ENCODE measurements at regions of chr21 and their contacts with region 1.

Region 1: DNA sequence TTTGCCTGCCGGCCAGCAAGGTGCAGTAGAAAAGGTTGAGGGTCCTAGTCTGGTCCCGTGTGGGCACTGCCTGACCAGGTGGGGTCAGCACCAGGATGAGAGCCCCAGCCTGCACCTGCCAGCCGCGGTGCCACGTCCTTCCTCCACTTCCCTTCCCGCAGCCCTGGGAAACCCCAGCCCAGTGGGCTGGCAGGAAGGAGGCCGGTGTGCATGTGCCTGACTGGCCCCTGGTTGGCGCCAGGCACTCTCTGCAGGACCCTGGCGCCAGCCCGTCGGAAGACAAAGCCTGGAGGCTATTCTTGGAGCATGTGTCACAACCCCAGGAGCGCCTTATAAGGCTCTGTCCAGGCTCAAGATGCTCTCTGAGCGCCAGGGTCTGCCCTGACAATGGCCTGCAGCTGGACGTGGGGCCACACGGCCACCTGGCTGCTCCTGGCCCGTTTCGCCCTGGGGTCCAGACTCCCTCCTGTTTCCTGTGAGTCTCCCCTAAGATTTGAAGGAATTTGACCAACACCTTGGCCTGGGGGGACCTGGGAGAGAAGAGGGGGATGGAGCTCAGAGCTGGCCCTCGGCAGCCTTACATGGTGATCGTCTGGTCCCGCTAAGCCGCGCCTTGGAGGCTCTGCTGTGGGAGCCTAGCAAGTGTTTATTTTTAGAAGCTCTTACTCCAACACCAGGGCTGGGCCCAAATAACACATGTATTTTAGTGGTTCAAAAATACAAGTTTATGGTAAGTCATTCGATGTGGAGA is 31.9 kb upstream of the POFUT2 start:
- DNase-seq: peak; percentile 85
- H3K4me3 ChIP-seq: no peak overlapping the region
- H3K27ac ChIP-seq: peak overlapping the region; percentile 90
- H3K4me1 ChIP-seq: peaks cover 39% of the 10 kb centered on the region
- H3K27me3 ChIP-seq: no peaks in the 10 kb centered on the region
- CTCF ChIP-seq: peak in 1 of 2 donors; percentile 33
- POLR2A ChIP-seq: peak; percentile 47

Region 2: DNA sequence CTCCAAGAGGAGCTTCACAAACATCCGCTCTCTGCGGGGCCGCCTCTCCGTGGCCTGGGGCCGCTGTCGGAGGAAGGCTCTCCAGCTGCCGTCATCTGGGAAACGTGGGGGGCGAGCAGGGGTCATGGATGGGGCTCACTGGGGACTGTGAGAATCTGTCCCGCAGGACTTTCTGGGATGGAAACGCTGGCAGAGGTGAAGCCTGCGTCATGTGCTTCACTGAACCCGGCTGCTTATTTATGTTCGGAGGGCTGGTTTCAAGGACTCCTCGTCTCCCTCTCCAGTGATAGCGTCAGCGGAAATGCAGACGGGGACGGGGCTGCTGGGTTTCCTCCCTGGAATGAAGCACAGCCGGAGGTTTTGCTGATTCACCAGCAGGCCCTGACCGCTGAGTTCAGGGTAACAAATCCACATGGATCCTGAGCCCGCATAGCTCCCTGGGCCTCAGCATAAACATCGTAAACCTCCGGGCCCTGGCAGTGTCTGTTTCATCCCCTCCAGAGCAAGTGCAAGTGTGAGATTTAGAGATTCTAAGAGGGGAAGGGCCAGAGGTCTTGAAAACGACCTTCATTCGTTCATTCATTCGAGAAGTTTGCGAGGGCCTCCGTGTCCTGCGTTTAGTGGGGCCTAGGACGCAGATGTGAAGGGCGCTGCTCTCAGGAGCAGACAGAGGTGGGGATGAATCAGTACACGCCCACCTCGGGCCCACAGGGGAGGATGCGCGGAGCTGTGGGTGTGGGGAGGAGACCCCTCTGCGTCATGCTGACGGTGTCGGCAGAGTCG is 24.9 kb before region 1 on chr21:
- CTCF ChIA-PET with region 1: interaction called, 6 read pairs
- POLR2A ChIA-PET with region 1: no interaction called
- dilution Hi-C with region 1: no loop called
- intact Hi-C with region 1: loop called (anchors 1 kb)
- DNase-seq: peak; percentile 98
- H3K4me3 ChIP-seq: no peak overlapping the region
- H3K27ac ChIP-seq: peak overlapping the region; percentile 100
- H3K4me1 ChIP-seq: peaks cover 35% of the 10 kb centered on the region
- H3K27me3 ChIP-seq: no peaks in the 10 kb centered on the region
- CTCF ChIP-seq: no peak
- POLR2A ChIP-seq: peak; percentile 87

Region 3: DNA sequence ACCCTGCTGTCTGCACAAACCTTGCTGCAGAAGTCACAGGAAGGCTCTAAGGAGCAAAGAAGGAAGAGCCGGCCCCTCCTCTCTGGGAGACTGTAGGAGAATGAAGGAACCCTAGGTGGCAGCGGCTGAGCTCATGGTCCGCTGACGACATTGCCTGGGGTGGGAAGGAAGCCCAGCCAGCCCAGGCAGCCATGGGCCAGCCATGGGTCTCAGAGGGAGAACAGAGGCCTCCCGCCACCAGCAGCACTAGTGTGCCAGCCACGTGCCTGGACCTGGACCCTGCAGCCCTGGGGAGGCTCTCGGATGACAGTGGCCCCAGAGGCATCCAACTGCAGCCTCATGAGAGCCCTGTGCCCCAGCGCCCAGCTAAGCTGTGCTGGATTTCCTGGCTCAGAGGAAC is 17.2 kb after region 1 on chr21:
- CTCF ChIA-PET with region 1: no interaction called
- POLR2A ChIA-PET with region 1: no interaction called
- dilution Hi-C with region 1: no loop called
- intact Hi-C with region 1: no loop called
- DNase-seq: no peak
- H3K4me3 ChIP-seq: no peak overlapping the region
- H3K27ac ChIP-seq: no peak overlapping the region
- H3K4me1 ChIP-seq: peaks cover 11% of the 10 kb centered on the region
- H3K27me3 ChIP-seq: no peaks in the 10 kb centered on the region
- CTCF ChIP-seq: no peak
- POLR2A ChIP-seq: no peak

Region 4: GRCh38 chr21:45404730-45405270 is 85.2 kb after region 1 on chr21 and contains the start of gene COL18A1:
- CTCF ChIA-PET with region 1: interaction called, 4 read pairs
- POLR2A ChIA-PET with region 1: no interaction called
- dilution Hi-C with region 1: no loop called
- intact Hi-C with region 1: loop called (anchors 1 kb)
- DNase-seq: peak; percentile 39
- H3K4me3 ChIP-seq: peak within 1 kb of the TSS; percentile 72 to 87 (median 79)
- H3K27ac ChIP-seq: peak within 1 kb of the TSS; percentile 95
- H3K4me1 ChIP-seq: peaks cover 18% of the 10 kb centered on the region
- H3K27me3 ChIP-seq: no peaks in the 10 kb centered on the region
- CTCF ChIP-seq: no peak
- POLR2A ChIP-seq: no peak
- total RNA-seq, gene COL18A1: 252 and 274 TPM in 2 replicates

Region 5: DNA sequence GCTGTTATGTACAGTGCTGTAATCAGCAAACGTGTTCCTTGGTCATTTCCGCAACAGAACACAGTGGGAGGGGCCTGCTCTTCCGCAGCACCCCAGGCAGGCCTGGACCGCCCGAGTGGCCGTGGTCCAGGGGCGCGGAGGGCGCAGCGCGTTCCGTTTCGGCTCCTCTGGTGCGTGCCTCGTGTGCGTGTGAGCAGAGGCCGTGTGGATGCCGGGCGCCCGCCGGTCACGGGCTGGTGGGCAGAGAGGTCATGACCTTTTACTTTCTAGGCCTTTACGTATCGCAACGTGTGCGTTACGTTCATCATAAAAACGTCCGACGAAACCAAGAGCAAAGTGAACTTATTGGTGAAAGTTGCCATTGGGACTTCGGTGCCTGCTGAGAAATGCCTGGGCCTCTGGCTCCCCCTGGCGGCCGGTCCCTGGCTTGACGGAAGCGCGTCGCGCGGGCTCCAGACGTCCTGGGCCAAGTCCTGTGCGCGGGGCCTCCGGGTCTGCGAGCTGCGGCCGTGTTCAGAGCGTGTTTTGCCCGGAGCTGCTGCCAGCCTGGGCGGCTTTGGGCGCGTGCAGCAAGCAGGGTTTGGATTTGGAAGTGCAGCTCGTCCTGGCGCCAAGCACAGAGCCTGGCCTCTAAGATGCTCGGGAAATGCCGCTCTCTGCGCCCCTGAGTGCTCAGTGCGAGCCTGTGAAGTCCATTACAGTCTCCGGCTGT is 119.7 kb after region 1 on chr21:
- CTCF ChIA-PET with region 1: interaction called, 5 read pairs
- POLR2A ChIA-PET with region 1: interaction called, 4 read pairs
- dilution Hi-C with region 1: no loop called
- intact Hi-C with region 1: loop called (anchors 1 kb)
- DNase-seq: peak; percentile 91
- H3K4me3 ChIP-seq: peak overlapping the region in 2 of 3 experiments; percentile 7 to 26
- H3K27ac ChIP-seq: peak overlapping the region; percentile 82
- H3K4me1 ChIP-seq: peaks cover 15% of the 10 kb centered on the region
- H3K27me3 ChIP-seq: no peaks in the 10 kb centered on the region
- CTCF ChIP-seq: peak; percentile 94 to 96
- POLR2A ChIP-seq: no peak

Region 6: DNA sequence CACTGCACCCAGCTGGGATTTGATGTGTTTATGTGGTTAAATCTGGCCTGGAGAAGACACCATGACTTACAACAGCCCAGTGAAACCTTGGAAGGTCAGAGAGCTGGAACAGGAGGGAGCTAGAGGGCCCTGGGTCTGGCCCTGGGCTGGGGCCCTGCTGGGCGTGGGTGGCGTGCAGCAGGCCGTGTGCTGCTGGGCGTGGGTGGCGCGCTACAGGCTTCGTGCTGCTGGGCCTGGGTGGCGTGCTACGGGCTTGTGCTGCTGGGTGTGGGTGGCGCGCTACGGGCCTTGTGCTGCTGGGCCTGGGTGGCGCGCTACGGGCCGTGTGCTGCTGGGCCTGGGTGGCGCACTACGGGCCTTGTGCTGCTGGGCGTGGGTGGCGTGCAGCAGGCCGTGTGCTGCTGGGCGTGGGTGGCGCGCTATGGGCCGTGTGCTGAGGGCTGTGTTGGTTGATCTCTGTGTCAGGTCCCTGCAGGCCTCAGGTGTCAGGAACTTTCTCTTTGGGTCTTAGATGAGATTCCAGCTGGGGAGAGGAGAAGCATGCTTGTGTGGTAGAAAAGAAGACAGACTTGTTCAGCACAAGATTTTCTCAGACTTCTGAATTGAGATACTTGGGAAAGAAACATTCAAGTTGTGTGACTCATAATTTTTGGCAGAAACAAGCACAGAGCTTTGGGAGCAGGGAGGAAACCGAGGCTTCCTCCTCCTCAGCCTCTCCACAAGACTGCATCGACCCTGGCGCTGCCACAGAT is 151.3 kb after region 1 on chr21:
- CTCF ChIA-PET with region 1: no interaction called
- POLR2A ChIA-PET with region 1: no interaction called
- dilution Hi-C with region 1: no loop called
- intact Hi-C with region 1: loop called (anchors 1 kb)
- DNase-seq: peak; percentile 87
- H3K4me3 ChIP-seq: no peak overlapping the region
- H3K27ac ChIP-seq: peak overlapping the region; percentile 79
- H3K4me1 ChIP-seq: peaks cover 22% of the 10 kb centered on the region
- H3K27me3 ChIP-seq: no peaks in the 10 kb centered on the region
- CTCF ChIP-seq: no peak
- POLR2A ChIP-seq: no peak

Measured in endothelial cell of umbilical vein (primary cell).